Tibial artery (tissue), 4 donors: ENCODE measurements at regions of chr4 and their contacts with region 1.

Region 1: DNA sequence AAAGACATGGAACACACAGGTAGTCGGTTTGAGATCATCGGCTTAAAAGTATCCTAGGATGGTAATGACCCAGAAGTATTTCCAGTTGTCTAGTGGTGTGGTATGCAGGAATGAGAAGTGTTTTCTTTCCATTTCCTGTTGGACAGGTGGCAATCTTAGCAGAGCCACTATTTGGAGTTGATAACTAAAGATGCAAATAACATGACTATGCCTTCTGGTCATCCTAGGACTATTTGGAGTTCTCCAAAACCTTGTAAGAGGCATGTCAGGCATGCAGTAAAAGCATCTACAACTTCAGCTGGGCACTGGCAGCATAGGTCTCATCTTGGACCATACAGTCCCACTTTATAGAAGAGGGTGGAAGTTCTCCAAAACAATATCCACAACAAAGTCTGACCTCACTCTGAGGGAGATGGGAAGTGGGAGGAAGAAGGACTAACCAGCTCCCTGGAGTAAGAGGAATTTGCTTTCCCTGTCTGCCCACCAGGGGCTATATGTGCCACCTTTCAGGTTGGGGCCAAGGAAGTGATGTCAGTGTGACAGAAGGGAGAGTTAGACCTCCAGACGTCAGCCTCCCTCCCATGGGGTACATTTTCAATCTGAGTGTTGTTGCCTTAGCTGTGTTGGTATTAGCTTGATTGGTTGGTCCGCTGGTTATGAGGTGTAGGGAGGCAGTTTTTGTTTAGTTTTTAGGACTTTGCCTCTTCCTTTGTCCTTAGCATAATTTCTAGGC is 101.2 kb upstream of the MYOZ2 start:
- DNase-seq: no peak
- H3K4me3 ChIP-seq: peak overlapping the region; percentile 3 to 55
- H3K27ac ChIP-seq: peak overlapping the region; percentile 86 to 91
- H3K4me1 ChIP-seq: peaks cover 0 to 100% (median 67%) of the 10 kb centered on the region in 4 donors
- H3K27me3 ChIP-seq: no peaks in the 10 kb centered on the region
- CTCF ChIP-seq: no peak

Region 2: DNA sequence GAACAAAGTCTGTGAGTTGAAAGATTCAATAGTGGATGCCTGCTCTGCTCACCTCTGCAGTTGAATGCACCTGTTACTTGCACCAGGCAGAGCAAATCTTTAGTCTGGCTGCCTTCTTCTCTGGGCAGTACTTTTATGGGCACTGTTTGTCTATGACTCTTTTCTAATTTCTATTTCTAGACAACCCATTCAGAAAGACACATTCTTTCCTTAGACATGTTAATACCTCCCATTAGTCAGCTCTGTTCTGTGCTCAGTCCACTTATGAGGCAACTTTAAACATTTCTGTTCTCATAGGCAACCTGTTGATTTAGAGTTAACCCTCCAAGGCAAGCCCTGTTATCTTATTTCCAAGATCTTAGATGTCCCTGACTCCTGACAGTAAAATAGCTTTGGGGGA is 36.8 kb before region 1 on chr4:
- intact Hi-C with region 1: loop called (anchors 5 kb)
- DNase-seq: no peak
- H3K4me3 ChIP-seq: peak overlapping the region; percentile 3 to 17
- H3K27ac ChIP-seq: peak overlapping the region; percentile 81 to 86
- H3K4me1 ChIP-seq: peaks cover 0 to 100% (median 42%) of the 10 kb centered on the region in 4 donors
- H3K27me3 ChIP-seq: no peaks in the 10 kb centered on the region
- CTCF ChIP-seq: no peak

Region 3: DNA sequence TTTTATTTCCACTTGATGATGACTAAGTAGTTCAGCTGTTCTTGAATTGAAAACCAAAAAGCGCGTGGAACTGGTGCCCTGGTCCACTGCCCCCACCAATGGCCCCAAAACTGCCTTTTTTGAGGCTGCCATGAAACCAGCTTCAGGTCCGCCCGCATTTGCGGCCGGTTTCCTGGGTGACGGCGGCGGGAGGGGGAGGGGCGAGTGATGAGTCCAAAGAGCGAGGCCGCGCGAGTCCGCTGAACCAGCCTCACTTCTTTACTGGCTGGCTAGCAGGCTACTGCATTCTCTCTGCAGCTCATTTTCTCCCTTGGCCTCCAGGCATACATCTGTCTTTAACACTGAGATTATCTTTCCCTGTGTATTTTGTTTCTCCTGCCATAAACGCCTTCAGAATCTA is 360.4 kb after region 1 on chr4:
- intact Hi-C with region 1: no loop called
- DNase-seq: no peak
- H3K4me3 ChIP-seq: no peak overlapping the region
- H3K27ac ChIP-seq: no peak overlapping the region
- H3K4me1 ChIP-seq: no peaks in the 10 kb centered on the region
- H3K27me3 ChIP-seq: no peaks in the 10 kb centered on the region
- CTCF ChIP-seq: no peak